Calu3 (cell line): ENCODE measurements at regions of chr2 and their contacts with region 1.

Region 1: GRCh38 chr2:157055660-157056199 is 201.8 kb upstream of the GALNT5 start:
- DNase-seq: peak; percentile 5
- H3K4me3 Mint-ChIP-seq: no peak overlapping the region
- H3K27ac Mint-ChIP-seq: peak overlapping the region; percentile 45
- H3K4me1 Mint-ChIP-seq: peaks cover 23% of the 10 kb centered on the region
- H3K27me3 Mint-ChIP-seq: no peaks in the 10 kb centered on the region
- CTCF ChIP-seq: peak; percentile 45

Region 2: DNA sequence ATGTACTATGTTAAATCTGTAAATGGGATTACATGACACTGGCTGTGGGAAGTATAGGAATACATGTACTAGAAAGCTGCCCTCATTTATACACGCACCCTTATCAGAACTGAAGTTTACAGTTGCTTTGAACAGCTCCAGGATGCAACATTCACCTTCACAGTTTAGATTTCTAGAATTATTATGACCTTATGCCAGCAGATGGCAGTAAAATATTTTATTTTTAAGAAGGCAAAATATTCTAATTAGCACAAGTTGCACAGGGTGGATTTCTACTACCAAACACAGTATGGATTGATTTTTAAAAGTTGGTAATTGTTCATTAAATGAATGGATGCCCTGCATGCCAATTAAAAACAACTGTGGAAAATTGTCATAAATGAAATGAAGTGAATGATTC is 1686.8 kb before region 1 on chr2:
- CTCF ChIA-PET with region 1: interaction called, 4 read pairs
- intact Hi-C with region 1: loop called (anchors 2 kb)
- DNase-seq: no peak
- H3K4me3 Mint-ChIP-seq: no peak overlapping the region
- H3K27ac Mint-ChIP-seq: no peak overlapping the region
- H3K4me1 Mint-ChIP-seq: no peaks in the 10 kb centered on the region
- H3K27me3 Mint-ChIP-seq: no peaks in the 10 kb centered on the region
- CTCF ChIP-seq: no peak

Region 3: DNA sequence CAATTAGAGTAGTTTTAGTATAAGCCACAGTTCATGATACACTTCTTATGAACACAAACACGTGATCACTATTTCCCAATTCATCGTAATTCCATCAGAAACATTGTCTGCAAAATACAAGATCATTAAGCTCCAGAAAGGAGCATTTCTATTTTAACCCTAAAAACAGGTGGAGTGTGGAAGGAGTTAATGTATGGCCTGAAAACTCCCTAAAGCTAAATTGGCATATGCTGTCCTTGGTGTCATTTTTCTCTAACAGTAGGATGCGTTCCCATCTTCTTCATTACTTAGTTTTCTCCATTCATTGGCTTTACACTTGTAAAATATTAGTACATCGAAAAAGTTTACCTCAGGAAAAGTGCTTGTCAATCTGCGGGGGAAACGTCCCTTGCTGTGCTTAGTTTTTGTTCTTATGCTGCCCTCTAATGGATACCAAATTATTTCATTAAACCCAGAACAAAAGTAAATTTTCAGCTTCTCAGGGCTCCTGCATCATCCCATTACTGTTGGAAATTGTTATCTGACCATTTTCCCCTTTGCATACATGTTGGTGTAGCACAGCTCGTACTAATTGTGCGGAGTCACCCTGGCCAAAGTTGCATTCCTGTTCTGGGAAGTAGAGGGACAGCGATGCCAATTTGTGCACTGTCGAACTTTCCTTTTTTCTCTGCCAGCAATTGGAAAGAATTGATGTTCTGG is 466.2 kb before region 1 on chr2:
- CTCF ChIA-PET with region 1: interaction called, 4 read pairs
- intact Hi-C with region 1: loop called (anchors 5 kb)
- DNase-seq: peak; percentile 6
- H3K4me3 Mint-ChIP-seq: no peak overlapping the region
- H3K27ac Mint-ChIP-seq: no peak overlapping the region
- H3K4me1 Mint-ChIP-seq: no peaks in the 10 kb centered on the region
- H3K27me3 Mint-ChIP-seq: no peaks in the 10 kb centered on the region
- CTCF ChIP-seq: peak; percentile 28

Region 4: GRCh38 chr2:156908825-156909224 is 146.9 kb before region 1 on chr2:
- CTCF ChIA-PET with region 1: no interaction called
- intact Hi-C with region 1: loop called (anchors 5 kb)
- DNase-seq: no peak
- H3K4me3 Mint-ChIP-seq: no peak overlapping the region
- H3K27ac Mint-ChIP-seq: no peak overlapping the region
- H3K4me1 Mint-ChIP-seq: peaks cover 17% of the 10 kb centered on the region
- H3K27me3 Mint-ChIP-seq: no peaks in the 10 kb centered on the region
- CTCF ChIP-seq: no peak

Region 5: DNA sequence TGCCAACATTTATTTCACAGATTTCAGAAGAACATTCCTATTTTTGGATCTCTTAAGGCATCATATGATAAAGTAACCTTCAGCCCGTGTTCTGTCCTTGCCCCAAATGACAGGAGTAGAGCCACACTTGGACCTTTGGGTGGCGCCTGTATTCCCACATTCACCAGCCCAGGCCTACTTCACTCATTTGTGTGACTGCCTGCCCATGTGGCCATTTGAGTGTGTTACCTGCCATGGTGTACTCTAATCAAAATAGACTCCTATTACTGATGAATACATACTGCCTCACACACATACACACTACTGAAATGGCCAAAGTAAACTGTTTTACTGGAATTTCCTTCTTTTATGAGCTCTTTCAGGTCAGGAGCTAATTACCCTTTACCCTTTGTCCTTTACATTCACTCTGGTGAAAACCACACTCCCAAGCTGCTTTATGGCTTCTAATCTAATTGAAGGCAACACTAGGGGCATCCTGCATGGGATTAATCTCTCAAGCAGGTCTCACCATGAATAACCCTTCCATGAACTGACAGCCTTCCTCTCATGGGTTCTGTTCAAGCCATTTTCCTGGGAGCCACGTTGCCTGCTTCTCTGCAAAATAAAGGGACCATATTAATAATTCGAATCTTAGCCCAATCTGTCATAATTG is 69.3 kb before region 1 on chr2:
- CTCF ChIA-PET with region 1: no interaction called
- intact Hi-C with region 1: no loop called
- DNase-seq: no peak
- H3K4me3 Mint-ChIP-seq: no peak overlapping the region
- H3K27ac Mint-ChIP-seq: no peak overlapping the region
- H3K4me1 Mint-ChIP-seq: no peaks in the 10 kb centered on the region
- H3K27me3 Mint-ChIP-seq: no peaks in the 10 kb centered on the region
- CTCF ChIP-seq: no peak

Region 6: GRCh38 chr2:157182834-157183396 is 127.2 kb after region 1 on chr2:
- CTCF ChIA-PET with region 1: interaction called, 12 read pairs
- intact Hi-C with region 1: loop called (anchors 1 kb)
- DNase-seq: peak; percentile 34
- H3K4me3 Mint-ChIP-seq: peak overlapping the region; percentile 42
- H3K27ac Mint-ChIP-seq: peak overlapping the region; percentile 89
- H3K4me1 Mint-ChIP-seq: peaks cover 40% of the 10 kb centered on the region
- H3K27me3 Mint-ChIP-seq: no peaks in the 10 kb centered on the region
- CTCF ChIP-seq: no peak

Region 7: GRCh38 chr2:157246765-157247407 is 191.2 kb after region 1 on chr2:
- CTCF ChIA-PET with region 1: no interaction called
- intact Hi-C with region 1: no loop called
- DNase-seq: no peak
- H3K4me3 Mint-ChIP-seq: peak overlapping the region; percentile 19
- H3K27ac Mint-ChIP-seq: peak overlapping the region; percentile 89
- H3K4me1 Mint-ChIP-seq: peaks cover 40% of the 10 kb centered on the region
- H3K27me3 Mint-ChIP-seq: no peaks in the 10 kb centered on the region
- CTCF ChIP-seq: no peak